Right ventricle myocardium superior (tissue), 1 donor: ENCODE measurements at regions of chr15 and their contacts with region 1.

Region 1: DNA sequence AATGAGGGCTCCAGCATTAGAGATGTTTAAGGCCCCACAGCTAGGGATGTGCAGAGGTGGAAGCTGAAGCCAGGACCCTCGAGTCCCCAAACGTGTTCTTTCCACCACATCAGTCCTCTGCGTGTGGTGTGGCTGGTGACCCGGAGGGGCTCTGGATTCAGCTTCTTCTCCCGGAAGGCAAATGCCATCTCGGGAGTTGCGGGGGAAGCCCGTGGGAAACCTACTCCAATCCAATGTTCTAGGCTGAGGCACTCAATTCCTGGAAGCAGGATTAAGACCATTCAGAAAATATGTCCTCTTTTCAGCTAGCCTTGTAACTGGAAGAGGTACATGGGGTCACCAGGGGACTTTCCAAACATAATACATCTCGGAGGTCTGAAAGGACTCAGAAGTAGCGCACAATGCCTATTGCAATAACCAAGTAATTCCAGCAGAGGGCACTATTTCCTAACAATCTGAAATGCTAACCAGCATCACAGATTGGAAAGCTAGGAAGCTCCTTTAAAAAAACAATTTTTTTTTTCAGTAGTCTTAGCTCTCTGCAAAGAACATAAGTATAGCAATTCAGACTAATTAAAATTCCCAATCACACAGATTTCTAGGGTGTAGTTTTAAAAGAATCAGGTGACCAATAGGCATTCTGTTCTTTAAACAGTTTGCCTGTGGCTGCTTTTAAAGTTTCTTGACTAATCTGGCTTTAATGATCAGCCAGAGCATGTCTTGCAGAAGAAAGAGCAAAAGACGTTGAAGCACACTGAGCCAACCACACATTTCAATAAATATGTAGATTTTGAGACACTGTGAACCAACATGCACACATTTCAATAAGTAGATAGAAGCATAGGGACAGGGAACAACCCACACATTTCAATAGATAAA is 36.1 kb downstream of the BNC1 start:
- DNase-seq: no peak
- ATAC-seq: peak; percentile 57

Region 2: GRCh38 chr15:83379574-83379973 is 131.2 kb after region 1 on chr15:
- intact Hi-C with region 1: loop called (anchors 5 kb)
- DNase-seq: no peak
- ATAC-seq: no peak

Region 3: DNA sequence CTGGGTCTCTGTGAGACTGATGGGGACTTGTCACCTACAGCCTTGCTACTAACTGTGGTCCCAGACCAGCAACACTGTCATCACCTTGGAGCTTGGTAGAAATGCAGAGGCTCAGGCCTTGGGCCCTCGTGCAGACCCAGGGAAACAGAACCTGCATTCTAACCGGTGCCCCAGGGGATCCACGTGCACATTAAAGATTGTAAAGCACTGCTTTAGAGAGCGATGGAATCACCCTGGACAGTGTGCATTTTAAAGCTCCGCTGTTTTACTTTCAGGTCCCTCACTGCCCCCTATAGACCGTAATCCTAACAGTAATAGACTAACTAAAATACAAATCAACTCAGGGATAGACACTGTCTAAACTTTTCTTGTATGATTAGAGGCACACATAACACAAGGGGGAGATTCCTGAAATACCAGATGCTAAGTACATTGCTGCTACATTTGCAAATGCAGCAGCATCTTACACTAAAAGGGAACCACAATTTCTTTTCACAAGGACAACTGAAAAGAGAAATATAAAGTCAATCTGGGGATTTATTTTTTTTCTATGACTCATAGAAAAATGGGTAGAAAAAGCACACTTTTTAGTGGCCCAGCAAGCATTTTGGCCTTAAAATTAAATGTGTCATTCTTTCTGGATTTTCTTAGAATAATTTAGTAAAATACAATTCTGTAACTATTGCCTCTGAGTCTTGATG is 188.2 kb after region 1 on chr15:
- intact Hi-C with region 1: loop called (anchors 5 kb)
- DNase-seq: no peak
- ATAC-seq: no peak

Region 4: GRCh38 chr15:83559310-83559966 is 311.0 kb after region 1 on chr15:
- intact Hi-C with region 1: loop called (anchors 2 kb)
- DNase-seq: no peak
- ATAC-seq: peak; percentile 77